HCT116 (cell line): ENCODE measurements at regions of chr5 and their contacts with region 1.

Region 1: GRCh38 chr5:78634634-78635033 is 13.9 kb downstream of the LHFPL2 start:
- DNase-seq: no peak
- ATAC-seq: no peak
- H3K4me3 ChIP-seq: no peak overlapping the region
- H3K27ac ChIP-seq: no peak overlapping the region
- H3K4me1 ChIP-seq: peaks cover 0 to 12% of the 10 kb centered on the region in 2 experiments; a peak in 2 of 4 replicates
- H3K27me3 ChIP-seq: no peaks in the 10 kb centered on the region
- CTCF ChIP-seq: peak; percentile 26 to 32 (median 32); a peak in 4 of 6 replicates
- POLR2A ChIP-seq: no peak
- RAD21 ChIP-seq: peak; percentile 45

Region 2: DNA sequence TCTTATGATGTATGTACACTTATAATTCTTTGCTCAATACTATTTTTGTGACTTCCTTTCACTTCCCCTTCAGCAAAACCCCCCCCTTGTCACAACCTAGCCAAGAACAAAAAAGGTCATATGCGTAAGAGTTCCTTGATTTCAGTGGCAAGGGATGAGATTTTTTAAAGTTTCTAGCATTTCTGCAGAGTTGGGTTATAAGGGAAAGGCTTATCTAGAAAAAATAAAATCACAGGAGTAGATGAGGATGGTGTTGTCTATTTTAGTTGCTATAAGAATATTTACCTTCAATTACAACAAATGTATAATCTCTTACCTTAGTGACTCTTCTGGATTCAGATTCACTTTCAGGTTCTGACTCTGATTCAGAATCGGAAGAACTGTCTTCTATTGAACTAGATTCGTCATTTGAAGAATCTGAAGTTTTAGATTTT is 524.7 kb before region 1 on chr5:
- CTCF ChIA-PET with region 1: no interaction called
- POLR2A ChIA-PET with region 1: no interaction called
- RAD21 ChIA-PET with region 1: no interaction called
- intact Hi-C with region 1: no loop called
- DNase-seq: no peak
- ATAC-seq: no peak
- H3K4me3 ChIP-seq: no peak overlapping the region
- H3K27ac ChIP-seq: no peak overlapping the region
- H3K4me1 ChIP-seq: no peaks in the 10 kb centered on the region
- H3K27me3 ChIP-seq: no peaks in the 10 kb centered on the region
- CTCF ChIP-seq: no peak
- POLR2A ChIP-seq: no peak
- RAD21 ChIP-seq: no peak

Region 3: DNA sequence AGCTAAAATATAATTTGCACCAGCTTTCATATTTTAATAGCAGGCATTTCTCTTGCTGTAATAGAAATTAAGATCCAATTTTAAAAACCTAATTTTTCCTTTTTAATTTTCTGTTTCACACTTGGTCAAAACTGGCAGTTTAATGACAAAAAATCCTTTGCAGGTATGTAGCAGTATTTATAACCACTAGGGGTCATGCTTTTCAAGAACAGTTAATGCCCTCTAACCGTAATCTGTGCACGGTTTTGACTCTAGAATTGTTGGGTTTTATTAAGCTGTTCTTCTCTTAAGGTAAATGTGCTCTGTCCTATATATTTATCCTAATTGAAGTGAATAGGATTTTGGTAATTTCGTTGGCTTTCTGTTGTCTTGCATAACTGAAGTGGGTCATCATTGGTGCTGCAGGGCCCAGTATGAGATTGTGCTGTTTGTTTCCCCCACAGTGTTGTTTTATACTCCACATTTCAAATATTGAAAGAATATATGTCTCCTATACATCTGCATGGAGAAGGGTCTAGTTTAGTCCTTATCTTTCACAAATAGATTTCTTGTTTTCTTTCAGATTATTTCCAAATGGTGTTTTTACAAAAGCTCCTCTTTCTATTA is 166.8 kb before region 1 on chr5:
- CTCF ChIA-PET with region 1: no interaction called
- POLR2A ChIA-PET with region 1: no interaction called
- RAD21 ChIA-PET with region 1: no interaction called
- intact Hi-C with region 1: loop called (anchors 5 kb)
- DNase-seq: no peak
- ATAC-seq: peak; percentile 72
- H3K4me3 ChIP-seq: no peak overlapping the region
- H3K27ac ChIP-seq: no peak overlapping the region
- H3K4me1 ChIP-seq: no peaks in the 10 kb centered on the region
- H3K27me3 ChIP-seq: no peaks in the 10 kb centered on the region
- CTCF ChIP-seq: peak; percentile 54 to 81 (median 66); a peak in 5 of 6 replicates
- POLR2A ChIP-seq: no peak
- RAD21 ChIP-seq: peak; percentile 57